ENCODE measurements at regions of chr17 and their contacts with region 1.

Region 1: DNA sequence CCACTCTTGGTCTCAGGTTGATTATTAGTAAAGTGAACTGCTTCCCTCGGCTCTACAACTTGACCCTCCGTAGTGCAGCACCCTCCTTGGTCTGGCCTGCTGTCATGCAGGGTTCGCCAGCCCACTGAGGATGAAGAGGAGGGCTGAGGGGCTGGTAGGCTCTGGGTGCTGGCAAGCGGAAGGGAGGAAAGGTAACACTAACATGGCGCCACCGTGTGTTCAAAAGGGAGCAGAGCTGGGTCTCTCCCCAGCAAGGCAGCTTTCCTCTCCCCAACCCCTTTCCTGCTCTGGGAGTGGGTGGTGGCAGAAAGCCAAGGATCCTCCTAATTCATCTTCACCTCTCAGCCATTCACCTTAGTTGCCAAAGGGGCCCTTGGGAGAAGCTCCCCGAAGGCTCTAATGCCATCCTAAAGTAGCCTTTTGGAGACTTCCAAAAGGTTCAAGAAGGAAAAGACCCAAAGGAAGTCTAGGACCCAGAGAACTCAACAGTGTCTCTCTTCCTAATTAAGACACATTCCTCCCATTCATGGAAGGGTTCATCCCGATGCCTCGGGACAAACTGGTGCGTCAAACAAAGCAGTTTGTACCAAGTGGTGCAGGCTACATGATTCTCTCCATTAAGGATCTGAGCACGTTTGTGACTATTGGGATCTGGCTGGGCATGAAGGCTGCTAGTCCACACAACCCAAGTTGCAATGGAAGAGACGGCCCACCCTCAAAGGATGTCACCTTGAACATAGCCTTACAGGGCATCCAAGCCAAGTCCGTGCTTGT is 90.8 kb upstream of the TOB1 start:
- DNase-seq: peak; percentile 58
- H3K4me3 ChIP-seq: no peak overlapping the region
- H3K27ac ChIP-seq: peak overlapping the region; percentile 82
- H3K4me1 ChIP-seq: peaks cover 45% of the 10 kb centered on the region
- H3K27me3 ChIP-seq: no peaks in the 10 kb centered on the region
- CTCF ChIP-seq: peak; percentile 81

Region 2: GRCh38 chr17:50853015-50853615 is 103.8 kb before region 1 on chr17:
- intact Hi-C with region 1: loop called (anchors 5 kb)
- DNase-seq: no peak
- H3K4me3 ChIP-seq: peak overlapping the region; percentile 59
- H3K27ac ChIP-seq: peak overlapping the region; percentile 91
- H3K4me1 ChIP-seq: peaks cover 48% of the 10 kb centered on the region
- H3K27me3 ChIP-seq: no peaks in the 10 kb centered on the region
- CTCF ChIP-seq: no peak

Region 3: DNA sequence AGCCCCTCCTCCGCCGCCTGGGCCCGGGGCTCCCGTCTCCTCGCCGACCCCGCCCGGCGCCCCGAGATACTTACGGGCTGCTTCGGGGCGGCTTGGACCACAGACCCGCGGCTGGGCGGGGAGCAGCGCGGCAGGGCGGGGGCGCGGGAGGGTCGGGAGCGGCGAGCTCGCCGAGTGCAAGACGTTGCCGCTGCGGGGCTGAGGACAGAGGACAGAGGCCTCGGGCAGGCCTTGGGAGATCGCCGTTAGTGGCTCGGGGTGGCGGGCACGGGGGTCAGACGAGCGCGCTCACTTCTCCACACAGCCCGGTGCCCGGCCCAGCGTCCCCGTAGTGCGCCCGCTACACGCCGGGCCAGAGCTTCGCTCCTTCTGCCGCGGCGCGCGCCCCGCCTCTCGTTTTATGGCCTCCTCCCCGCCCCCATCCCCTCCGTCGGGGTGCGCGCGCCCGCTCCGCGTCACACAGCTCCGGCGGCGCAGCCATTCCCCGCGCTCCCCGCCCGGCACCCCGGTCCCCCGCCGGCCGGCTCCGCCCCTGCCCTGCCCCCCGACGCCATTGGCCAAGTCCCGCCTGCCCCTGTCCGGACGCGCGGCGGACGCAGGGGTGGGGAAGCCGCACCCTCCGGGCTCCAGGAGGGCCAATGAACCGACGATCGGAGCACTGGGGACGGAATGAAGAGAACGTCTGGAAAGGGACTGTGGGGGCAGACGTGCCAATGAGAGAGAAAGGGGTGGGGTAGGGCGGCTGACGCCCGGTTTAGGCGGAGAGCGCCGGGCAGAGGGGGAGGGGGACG is 90.8 kb before region 1 on chr17 and contains the start of gene TOB1:
- intact Hi-C with region 1: no loop called
- DNase-seq: peak; percentile 99
- H3K4me3 ChIP-seq: peak within 1 kb of the TSS; percentile 94
- H3K27ac ChIP-seq: peak within 1 kb of the TSS; percentile 100
- H3K4me1 ChIP-seq: peaks cover 66% of the 10 kb centered on the region
- H3K27me3 ChIP-seq: no peaks in the 10 kb centered on the region
- CTCF ChIP-seq: no peak
- total RNA-seq, gene TOB1: 101 TPM

Region 4: GRCh38 chr17:50993544-50993943 is 36.6 kb after region 1 on chr17:
- intact Hi-C with region 1: no loop called
- DNase-seq: no peak
- H3K4me3 ChIP-seq: no peak overlapping the region
- H3K27ac ChIP-seq: no peak overlapping the region
- H3K4me1 ChIP-seq: no peaks in the 10 kb centered on the region
- H3K27me3 ChIP-seq: no peaks in the 10 kb centered on the region
- CTCF ChIP-seq: no peak